ENCODE measurements at regions of chr2 and their contacts with region 1.

Region 1: DNA sequence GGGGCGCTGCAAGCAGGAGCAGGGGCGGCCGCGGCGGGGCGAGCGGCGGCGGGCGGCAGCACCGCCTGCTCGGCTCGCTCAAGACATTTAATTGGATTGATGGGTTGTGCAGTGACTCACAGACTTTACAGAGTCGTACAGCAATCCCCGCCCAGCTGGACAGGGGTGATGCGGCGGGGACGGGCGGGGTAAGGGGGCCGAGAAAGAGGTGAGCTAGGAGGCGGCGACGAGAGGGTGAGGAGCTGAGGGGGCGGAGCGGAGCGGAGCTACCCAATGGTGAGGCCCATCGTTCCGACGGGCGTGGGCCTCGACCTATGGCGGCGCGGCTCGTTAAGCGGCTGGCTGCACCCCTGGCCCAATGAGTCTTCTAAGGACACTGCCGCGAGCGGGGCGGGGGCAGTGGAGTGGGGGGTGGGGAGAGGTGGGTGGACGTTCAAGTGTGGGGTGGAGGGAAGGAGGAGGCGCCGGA is 97.1 kb upstream of the SERTAD2 start:
- DNase-seq: peak; percentile 100
- H3K4me3 ChIP-seq: peak overlapping the region; percentile 60 to 97 (median 93)
- H3K27ac ChIP-seq: peak overlapping the region; percentile 80 to 92
- H3K4me1 ChIP-seq: peaks cover 20 to 33% (median 26%) of the 10 kb centered on the region in 4 experiments
- H3K27me3 ChIP-seq: no peaks in the 10 kb centered on the region

Region 2: DNA sequence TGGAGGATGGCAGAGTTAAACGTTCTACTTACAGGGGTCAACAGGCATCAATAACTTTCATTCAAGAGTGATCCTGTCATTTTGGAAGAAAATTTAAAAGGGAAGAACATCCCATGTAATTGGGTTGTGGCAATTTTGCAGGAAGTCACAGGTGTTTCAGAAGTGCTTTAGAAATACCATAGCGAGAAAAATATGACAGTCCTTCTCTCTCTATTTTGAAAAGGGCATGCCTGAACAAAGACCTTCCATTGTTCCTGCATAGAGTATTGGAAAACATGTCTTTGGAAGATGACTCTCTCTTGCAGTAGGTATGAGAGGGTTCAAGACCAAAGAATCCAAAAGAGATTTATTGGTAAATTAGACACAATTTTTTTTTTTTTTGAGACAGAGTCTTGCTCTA is 15.3 kb before region 1 on chr2:
- CTCF ChIA-PET with region 1: interaction called, 13 read pairs
- POLR2A ChIA-PET with region 1: no interaction called
- DNase-seq: no peak
- H3K4me3 ChIP-seq: no peak overlapping the region
- H3K27ac ChIP-seq: no peak overlapping the region
- H3K4me1 ChIP-seq: peaks cover 11 to 30% (median 18%) of the 10 kb centered on the region in 4 experiments
- H3K27me3 ChIP-seq: no peaks in the 10 kb centered on the region

Region 3: GRCh38 chr2:64763126-64763525 is 12.3 kb after region 1 on chr2:
- CTCF ChIA-PET with region 1: interaction called, 33 read pairs
- POLR2A ChIA-PET with region 1: interaction called, 10 read pairs
- DNase-seq: peak; percentile 40 to 86 (median 78)
- H3K4me3 ChIP-seq: peak overlapping the region in 4 of 7 experiments; percentile 19 to 60 (median 40)
- H3K27ac ChIP-seq: peak overlapping the region in 1 of 2 experiments; percentile 69
- H3K4me1 ChIP-seq: peaks cover 26 to 53% (median 39%) of the 10 kb centered on the region in 4 experiments
- H3K27me3 ChIP-seq: no peaks in the 10 kb centered on the region

Region 4: DNA sequence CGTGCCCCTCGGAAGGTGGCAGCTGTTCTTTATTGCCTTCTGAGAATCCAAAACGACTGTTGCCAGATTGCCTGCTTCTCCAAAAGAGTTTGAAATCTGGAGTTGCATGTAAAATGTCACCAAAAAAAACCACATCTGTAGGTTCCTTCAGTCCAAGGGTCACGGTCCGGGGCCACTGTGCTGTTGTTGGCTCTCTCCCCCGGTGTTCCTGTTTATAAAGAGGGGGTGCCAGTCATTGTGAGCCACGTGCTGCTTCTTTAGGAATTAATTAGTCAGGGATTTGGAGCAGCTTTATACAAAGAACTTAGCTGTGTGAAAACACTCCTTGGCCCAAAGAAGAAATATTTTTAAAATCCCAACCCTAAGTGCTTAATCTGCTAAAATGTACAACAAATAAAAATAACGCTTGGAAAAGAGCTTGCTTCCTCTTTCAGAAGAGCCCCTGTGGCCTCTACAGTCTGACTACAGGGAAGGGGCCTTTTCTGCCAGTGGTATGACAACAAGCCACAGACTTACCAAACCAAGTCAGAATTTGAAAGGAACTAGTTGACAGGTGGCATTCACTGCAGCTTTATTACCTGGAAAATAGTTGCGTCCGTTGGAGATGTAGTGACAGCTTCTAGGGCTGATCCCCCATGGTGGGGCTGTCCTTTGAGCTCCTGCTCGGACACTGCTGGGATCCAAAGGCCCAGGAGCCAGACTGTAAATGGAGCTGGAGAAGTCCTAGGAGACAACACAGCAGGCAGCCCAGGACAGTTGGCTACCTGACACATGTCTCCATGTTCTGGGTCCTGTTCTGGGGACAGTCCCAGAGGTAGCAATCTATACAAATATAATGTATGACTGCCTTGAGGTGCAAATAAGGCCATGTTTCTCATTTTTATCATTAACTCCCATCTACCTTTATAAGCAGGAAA is 153.8 kb after region 1 on chr2:
- CTCF ChIA-PET with region 1: no interaction called
- POLR2A ChIA-PET with region 1: no interaction called
- DNase-seq: peak in 2 of 3 donors; percentile 62 to 67
- H3K4me3 ChIP-seq: peak overlapping the region in 2 of 7 experiments; percentile 16 to 33
- H3K27ac ChIP-seq: no peak overlapping the region
- H3K4me1 ChIP-seq: peaks cover 0 to 39% (median 15%) of the 10 kb centered on the region in 4 experiments
- H3K27me3 ChIP-seq: no peaks in the 10 kb centered on the region